ENCODE measurements at regions of chr11 and their contacts with region 1.

Region 1: DNA sequence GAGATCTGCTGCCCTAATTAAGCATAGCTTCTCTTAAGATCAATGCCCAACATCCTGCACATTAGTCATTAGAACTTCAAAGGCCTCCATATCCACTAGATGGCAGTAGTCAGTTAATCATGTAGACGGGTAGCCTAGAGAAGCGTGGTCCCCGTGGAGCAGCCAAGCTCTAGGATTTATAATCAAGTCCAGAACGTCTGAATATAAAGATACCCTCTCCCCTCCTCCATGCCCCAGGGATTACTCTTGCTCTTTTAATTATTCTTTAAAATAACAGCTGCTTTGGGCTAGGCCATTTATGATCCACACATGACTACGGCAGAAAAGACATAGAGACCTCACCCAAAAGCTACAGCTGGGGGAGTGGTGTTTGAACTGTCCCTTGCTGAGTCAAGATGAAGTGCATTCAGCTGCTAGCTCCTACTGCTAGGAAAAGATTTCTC is 327.6 kb upstream of the PLET1 start:
- DNase-seq: peak; percentile 88
- H3K4me3 ChIP-seq: no peak overlapping the region
- H3K27ac ChIP-seq: peak overlapping the region in 3 of 4 donors; percentile 71 to 76 (median 72)
- H3K4me1 ChIP-seq: peaks cover 0 to 41% (median 40%) of the 10 kb centered on the region in 4 donors
- H3K27me3 ChIP-seq: no peaks in the 10 kb centered on the region
- CTCF ChIP-seq: peak; percentile 69 to 71 (median 70)
- EP300 ChIP-seq: no peak
- POLR2A ChIP-seq: no peak

Region 2: DNA sequence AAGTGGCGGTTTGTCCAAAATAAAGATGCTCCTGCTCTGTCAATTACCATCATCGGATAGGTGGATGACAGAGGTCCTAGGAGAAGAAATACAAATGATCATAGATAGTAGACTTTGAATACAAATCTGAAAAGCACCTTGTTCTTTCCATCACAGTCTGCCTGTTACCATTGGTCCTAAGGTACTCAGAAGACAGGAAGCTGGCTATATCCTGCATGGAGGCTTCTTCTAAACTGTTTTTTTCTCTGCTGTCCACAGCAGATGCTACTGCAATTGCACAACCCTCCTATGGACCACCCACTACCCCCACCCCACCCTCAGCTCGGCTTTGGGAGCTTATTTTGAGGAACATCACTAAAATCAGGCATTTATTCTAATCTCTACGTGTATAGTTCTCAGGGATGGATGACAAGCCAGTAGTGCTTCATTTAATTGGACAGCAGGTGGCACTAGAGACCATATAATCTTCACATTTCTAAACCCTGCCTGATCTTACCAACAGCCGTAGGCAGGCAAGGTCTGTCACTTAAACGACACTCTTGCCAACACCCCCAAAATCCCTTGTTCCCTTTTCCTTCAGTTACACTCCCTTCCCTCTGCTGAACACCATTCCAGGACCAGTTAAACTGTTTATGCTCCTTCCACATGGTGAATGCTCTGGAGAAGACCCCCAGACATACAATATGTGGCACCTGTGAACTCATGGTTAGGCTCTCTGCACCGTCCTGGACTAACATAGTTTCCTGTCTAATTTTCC is 368.6 kb before region 1 on chr11:
- intact Hi-C with region 1: loop called (anchors 10 kb)
- DNase-seq: peak; percentile 56
- H3K4me3 ChIP-seq: no peak overlapping the region
- H3K27ac ChIP-seq: no peak overlapping the region
- H3K4me1 ChIP-seq: peaks cover 0 to 21% (median 17%) of the 10 kb centered on the region in 4 donors
- H3K27me3 ChIP-seq: no peaks in the 10 kb centered on the region
- CTCF ChIP-seq: peak; percentile 75 to 82 (median 76)
- EP300 ChIP-seq: no peak
- POLR2A ChIP-seq: no peak

Region 3: GRCh38 chr11:112795142-112795815 is 207.0 kb after region 1 on chr11:
- intact Hi-C with region 1: loop called (anchors 5 kb)
- DNase-seq: no peak
- H3K4me3 ChIP-seq: no peak overlapping the region
- H3K27ac ChIP-seq: peak overlapping the region; percentile 67 to 75 (median 67)
- H3K4me1 ChIP-seq: peaks cover 0 to 44% (median 35%) of the 10 kb centered on the region in 4 donors
- H3K27me3 ChIP-seq: no peaks in the 10 kb centered on the region
- CTCF ChIP-seq: peak in 3 of 4 experiments; percentile 46 to 65 (median 57)
- EP300 ChIP-seq: no peak
- POLR2A ChIP-seq: no peak

Region 4: GRCh38 chr11:112817376-112817775 is 229.1 kb after region 1 on chr11:
- intact Hi-C with region 1: no loop called
- DNase-seq: no peak
- H3K4me3 ChIP-seq: no peak overlapping the region
- H3K27ac ChIP-seq: no peak overlapping the region
- H3K4me1 ChIP-seq: no peaks in the 10 kb centered on the region
- H3K27me3 ChIP-seq: no peaks in the 10 kb centered on the region
- CTCF ChIP-seq: no peak
- EP300 ChIP-seq: no peak
- POLR2A ChIP-seq: no peak

Region 5: GRCh38 chr11:112837162-112837826 is 249.0 kb after region 1 on chr11:
- intact Hi-C with region 1: no loop called
- DNase-seq: no peak
- H3K4me3 ChIP-seq: no peak overlapping the region
- H3K27ac ChIP-seq: no peak overlapping the region
- H3K4me1 ChIP-seq: peaks cover 0 to 15% (median 8%) of the 10 kb centered on the region in 4 donors
- H3K27me3 ChIP-seq: no peaks in the 10 kb centered on the region
- CTCF ChIP-seq: peak in 1 of 4 experiments; percentile 8
- EP300 ChIP-seq: no peak
- POLR2A ChIP-seq: no peak

Region 6: DNA sequence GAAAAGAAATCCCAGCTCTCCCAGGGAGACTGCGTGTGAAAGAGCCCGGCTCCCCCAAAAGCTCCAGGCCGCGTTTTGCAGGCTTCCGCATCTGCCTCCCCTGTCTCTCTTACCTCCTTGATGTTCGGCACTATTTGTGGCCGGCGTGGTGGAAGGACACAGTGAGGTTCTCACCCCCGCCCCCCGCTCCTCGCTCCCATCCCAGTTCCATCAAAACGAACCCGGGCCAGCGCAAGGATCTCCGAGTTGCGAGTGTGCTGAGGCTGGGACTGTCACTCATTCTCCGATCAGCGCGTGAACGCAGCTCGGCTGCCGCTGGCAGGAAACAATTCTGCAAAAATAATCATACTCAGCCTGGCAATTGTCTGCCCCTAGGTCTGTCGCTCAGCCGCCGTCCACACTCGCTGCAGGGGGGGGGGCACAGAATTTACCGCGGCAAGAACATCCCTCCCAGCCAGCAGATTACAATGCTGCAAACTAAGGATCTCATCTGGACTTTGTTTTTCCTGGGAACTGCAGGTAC is 372.9 kb after region 1 on chr11 and contains the start of gene NCAM1:
- intact Hi-C with region 1: loop called (anchors 5 kb)
- DNase-seq: peak; percentile 87
- H3K4me3 ChIP-seq: peak within 1 kb of the TSS; percentile 57 to 73 (median 68)
- H3K27ac ChIP-seq: peak within 1 kb of the TSS; percentile 64 to 77 (median 76)
- H3K4me1 ChIP-seq: peaks cover 0 to 20% (median 17%) of the 10 kb centered on the region in 4 donors
- H3K27me3 ChIP-seq: peaks cover 0 to 16% (median 0%) of the 10 kb centered on the region in 3 donors
- CTCF ChIP-seq: no peak
- EP300 ChIP-seq: no peak
- POLR2A ChIP-seq: no peak
- total RNA-seq, gene NCAM1: 64.2 to 124 (median 90.4) TPM

Region 7: GRCh38 chr11:113014262-113015097 is 426.2 kb after region 1 on chr11:
- intact Hi-C with region 1: loop called (anchors 2 kb)
- DNase-seq: peak; percentile 89
- H3K4me3 ChIP-seq: no peak overlapping the region
- H3K27ac ChIP-seq: peak overlapping the region in 3 of 4 donors; percentile 62 to 73 (median 69)
- H3K4me1 ChIP-seq: peaks cover 2 to 20% (median 18%) of the 10 kb centered on the region in 4 donors
- H3K27me3 ChIP-seq: no peaks in the 10 kb centered on the region
- CTCF ChIP-seq: no peak
- EP300 ChIP-seq: no peak
- POLR2A ChIP-seq: no peak

Region 8: GRCh38 chr11:113113801-113114706 is 525.8 kb after region 1 on chr11:
- intact Hi-C with region 1: loop called (anchors 1 kb)
- DNase-seq: peak; percentile 71
- H3K4me3 ChIP-seq: no peak overlapping the region
- H3K27ac ChIP-seq: peak overlapping the region in 3 of 4 donors; percentile 19 to 47 (median 43)
- H3K4me1 ChIP-seq: peaks cover 0 to 26% (median 21%) of the 10 kb centered on the region in 4 donors
- H3K27me3 ChIP-seq: no peaks in the 10 kb centered on the region
- CTCF ChIP-seq: peak; percentile 24 to 77 (median 70)
- EP300 ChIP-seq: no peak
- POLR2A ChIP-seq: no peak

Region 9: DNA sequence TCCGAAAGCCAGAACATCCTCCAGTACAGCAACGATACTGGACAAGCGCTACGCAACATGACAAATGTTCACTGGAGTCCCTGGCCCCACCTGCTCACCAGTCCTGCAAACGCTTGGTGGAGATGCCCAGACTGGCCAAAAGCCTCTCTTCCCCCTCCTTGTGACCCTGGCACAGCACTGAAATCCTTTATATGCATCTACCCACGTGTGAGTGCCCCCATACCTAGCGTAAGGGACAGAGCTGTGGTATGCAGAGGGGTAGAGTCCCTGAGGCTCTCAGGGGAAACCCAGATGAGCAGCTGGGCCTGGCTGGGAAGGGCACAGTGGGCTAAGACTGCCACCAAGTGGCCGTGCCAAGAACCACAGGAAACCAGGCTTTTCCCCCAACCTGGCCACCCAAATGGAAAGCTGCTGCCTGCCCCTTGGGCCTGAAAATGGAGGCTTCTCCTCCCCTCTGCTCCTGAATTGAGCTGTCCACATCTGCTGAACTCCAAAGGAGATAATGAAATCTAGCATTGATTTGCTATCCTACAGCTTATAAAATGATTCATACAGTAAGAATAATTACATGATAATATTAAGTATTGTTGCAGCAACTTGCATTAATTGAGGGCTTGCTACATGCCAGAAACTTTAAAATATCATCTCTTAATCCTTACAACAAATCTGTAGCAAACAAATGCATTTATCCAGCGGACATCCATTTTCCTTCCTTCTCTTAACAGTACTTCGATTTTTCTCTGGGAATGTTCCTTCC is 701.3 kb after region 1 on chr11:
- intact Hi-C with region 1: loop called (anchors 1 kb)
- DNase-seq: peak; percentile 80
- H3K4me3 ChIP-seq: no peak overlapping the region
- H3K27ac ChIP-seq: no peak overlapping the region
- H3K4me1 ChIP-seq: peaks cover 0 to 17% (median 17%) of the 10 kb centered on the region in 4 donors
- H3K27me3 ChIP-seq: no peaks in the 10 kb centered on the region
- CTCF ChIP-seq: peak; percentile 80 to 96 (median 86)
- EP300 ChIP-seq: no peak
- POLR2A ChIP-seq: no peak